IMR-90 (cell line): ENCODE measurements at regions of chr13 and their contacts with region 1.

Region 1: DNA sequence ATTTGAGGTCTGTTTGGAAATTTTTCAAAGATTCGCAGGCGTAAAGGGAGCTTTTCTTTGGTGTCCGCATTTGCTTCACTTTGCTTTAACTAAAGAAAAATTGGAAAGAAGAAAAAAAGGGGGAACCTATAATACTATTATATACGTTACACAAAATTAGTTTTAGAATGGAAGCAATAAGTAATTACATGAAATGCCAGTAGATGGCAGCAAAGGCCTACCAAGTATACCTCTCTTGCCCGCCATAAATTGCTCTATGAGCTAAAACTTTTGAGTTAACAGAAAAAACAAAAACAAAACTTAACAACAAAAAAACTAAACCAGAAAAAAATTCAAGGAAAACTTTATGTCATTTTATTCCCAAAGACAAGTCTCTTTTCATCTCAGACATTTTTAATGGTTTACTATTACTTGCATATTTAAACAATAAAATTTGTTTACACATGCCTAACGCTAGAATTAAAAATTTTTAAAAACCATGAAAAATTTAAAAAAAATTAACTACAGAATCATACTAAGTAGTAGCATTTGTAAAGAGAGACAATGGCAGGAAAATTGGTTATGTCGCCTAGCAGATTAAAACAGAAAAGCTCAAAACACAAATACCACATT is 271.4 kb downstream of the NALCN start:
- DNase-seq: peak; percentile 71
- ATAC-seq: peak; percentile 81
- H3K4me3 ChIP-seq: no peak overlapping the region
- H3K27ac ChIP-seq: no peak overlapping the region
- H3K4me1 ChIP-seq: peaks cover 5% of the 10 kb centered on the region
- H3K27me3 ChIP-seq: no peaks in the 10 kb centered on the region
- CTCF ChIP-seq: peak; percentile 85
- POLR2A ChIP-seq: no peak
- RAD21 ChIP-seq: peak; percentile 91

Region 2: DNA sequence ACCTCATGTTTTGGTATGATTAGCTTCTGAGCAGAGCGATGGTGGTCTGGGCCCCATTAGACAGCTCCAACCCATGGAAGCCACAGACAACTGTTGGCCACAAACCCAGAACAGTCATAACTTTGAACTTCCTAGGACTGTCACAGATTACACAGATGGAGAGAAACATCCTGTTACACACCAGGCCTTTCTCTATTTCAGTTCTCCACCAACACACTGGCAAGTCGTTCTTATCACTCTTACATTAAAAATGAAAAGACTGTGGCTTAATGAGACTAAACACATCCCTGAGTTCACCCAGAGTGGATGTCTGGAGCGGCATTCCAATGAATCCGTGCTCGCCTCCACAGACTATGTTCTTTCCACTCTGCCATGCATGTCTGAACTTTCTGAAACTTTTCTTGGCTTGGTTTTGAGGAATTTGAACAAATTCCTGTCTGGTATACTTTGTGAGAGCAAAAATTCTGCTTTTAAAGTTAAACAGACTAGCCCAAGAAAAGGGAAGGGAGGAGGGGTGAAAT is 162.3 kb after region 1 on chr13:
- CTCF ChIA-PET with region 1: no interaction called
- POLR2A ChIA-PET with region 1: no interaction called
- dilution Hi-C with region 1: no loop called
- in situ Hi-C with region 1: no loop called
- intact Hi-C with region 1: loop called (anchors 5 kb)
- DNase-seq: peak; percentile 90
- ATAC-seq: peak; percentile 90
- H3K4me3 ChIP-seq: no peak overlapping the region
- H3K27ac ChIP-seq: peak overlapping the region; percentile 19; the same call in 1 of the 2 replicates
- H3K4me1 ChIP-seq: peaks cover 19% of the 10 kb centered on the region
- H3K27me3 ChIP-seq: no peaks in the 10 kb centered on the region
- CTCF ChIP-seq: no peak
- POLR2A ChIP-seq: no peak
- RAD21 ChIP-seq: no peak

Region 3: DNA sequence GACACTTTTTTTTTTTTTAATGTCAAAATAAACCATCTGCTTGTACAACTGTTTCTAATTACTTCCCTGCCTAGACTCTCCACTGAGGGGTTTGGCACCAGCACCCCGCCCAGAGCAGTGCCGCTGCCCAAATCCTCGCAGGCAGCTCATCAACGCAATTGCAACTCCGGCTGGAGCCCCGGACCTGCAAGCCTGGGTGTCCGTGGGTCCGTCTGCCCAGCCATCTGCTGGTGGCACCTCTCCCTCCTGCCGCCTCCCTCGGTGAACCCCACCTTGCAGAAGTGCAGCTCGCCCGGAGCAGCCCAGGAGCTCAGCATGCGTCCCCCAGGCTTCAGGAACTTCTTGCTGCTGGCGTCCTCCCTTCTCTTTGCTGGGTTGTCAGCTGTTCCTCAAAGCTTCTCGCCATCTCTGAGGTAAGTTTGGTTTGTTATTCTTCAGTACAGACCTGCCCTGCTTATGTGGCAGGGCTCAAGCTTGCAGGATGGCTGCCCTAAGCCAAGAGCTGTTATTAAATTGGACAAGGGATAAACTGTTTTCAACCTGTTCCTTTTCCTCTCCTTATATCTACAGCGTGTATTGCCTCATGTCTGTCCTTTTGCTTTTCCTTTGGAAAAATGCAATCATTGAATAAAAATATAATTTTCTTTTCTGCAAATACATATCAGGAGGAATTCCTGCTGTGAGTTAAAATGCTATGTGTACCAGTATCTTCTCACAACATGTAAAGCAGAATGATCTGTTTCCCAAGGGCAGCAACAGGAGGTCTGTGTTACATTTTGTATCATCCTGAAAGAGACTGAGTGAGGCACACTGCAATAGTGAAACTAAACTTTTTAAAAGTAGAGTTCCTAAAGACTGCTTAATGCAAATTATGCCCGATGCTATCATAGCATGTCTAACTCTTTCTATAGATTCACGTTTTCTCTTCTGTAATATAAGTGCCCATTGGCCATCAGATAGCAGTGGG is 307.9 kb after region 1 on chr13 and contains the start of gene ITGBL1:
- CTCF ChIA-PET with region 1: interaction called, 6 read pairs
- POLR2A ChIA-PET with region 1: no interaction called
- dilution Hi-C with region 1: no loop called
- in situ Hi-C with region 1: no loop called
- intact Hi-C with region 1: loop called (anchors 1 kb)
- DNase-seq: peak; percentile 25
- ATAC-seq: peak; percentile 8
- H3K4me3 ChIP-seq: peak within 1 kb of the TSS; percentile 50
- H3K27ac ChIP-seq: peak within 1 kb of the TSS; percentile 74
- H3K4me1 ChIP-seq: peaks cover 35% of the 10 kb centered on the region
- H3K27me3 ChIP-seq: no peaks in the 10 kb centered on the region
- CTCF ChIP-seq: no peak
- POLR2A ChIP-seq: no peak
- RAD21 ChIP-seq: no peak
- total RNA-seq, gene ITGBL1: 22.2 and 46.7 TPM in 2 replicates

Region 4: GRCh38 chr13:101514788-101515187 is 369.9 kb after region 1 on chr13:
- CTCF ChIA-PET with region 1: no interaction called
- POLR2A ChIA-PET with region 1: no interaction called
- dilution Hi-C with region 1: no loop called
- in situ Hi-C with region 1: no loop called
- intact Hi-C with region 1: loop called (anchors 1 kb)
- DNase-seq: peak; percentile 68
- ATAC-seq: peak; percentile 76
- H3K4me3 ChIP-seq: no peak overlapping the region
- H3K27ac ChIP-seq: no peak overlapping the region
- H3K4me1 ChIP-seq: no peaks in the 10 kb centered on the region
- H3K27me3 ChIP-seq: no peaks in the 10 kb centered on the region
- CTCF ChIP-seq: peak; percentile 69
- POLR2A ChIP-seq: no peak
- RAD21 ChIP-seq: peak; percentile 73

Region 5: DNA sequence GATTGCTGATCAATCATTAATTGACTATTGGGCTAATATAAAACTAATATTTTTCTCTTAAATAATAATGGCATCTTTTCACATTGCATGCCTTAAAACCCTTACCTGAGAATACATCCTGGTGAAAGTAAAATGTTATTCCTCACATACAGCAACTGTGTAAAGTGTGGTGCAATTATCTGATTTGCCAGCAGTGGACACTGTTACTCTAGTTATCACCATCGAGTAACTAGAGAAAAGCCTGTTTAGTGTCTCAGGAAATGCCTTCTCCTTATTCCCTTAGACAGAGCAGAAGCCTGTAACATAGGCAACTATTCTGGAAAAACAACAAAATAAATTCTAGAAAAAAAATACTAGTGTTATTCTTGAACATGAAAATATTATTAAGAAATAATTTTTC is 797.1 kb after region 1 on chr13:
- CTCF ChIA-PET with region 1: no interaction called
- POLR2A ChIA-PET with region 1: no interaction called
- dilution Hi-C with region 1: no loop called
- in situ Hi-C with region 1: loop called (anchors 25 kb)
- intact Hi-C with region 1: loop called (anchors 2 kb)
- DNase-seq: peak; percentile 16
- ATAC-seq: peak; percentile 77; the same call in 1 of the 2 replicates
- H3K4me3 ChIP-seq: no peak overlapping the region
- H3K27ac ChIP-seq: no peak overlapping the region
- H3K4me1 ChIP-seq: no peaks in the 10 kb centered on the region
- H3K27me3 ChIP-seq: no peaks in the 10 kb centered on the region
- CTCF ChIP-seq: peak; percentile 56
- POLR2A ChIP-seq: no peak
- RAD21 ChIP-seq: peak; percentile 55

Region 6: GRCh38 chr13:102141625-102142472 is 996.9 kb after region 1 on chr13:
- CTCF ChIA-PET with region 1: no interaction called
- POLR2A ChIA-PET with region 1: no interaction called
- dilution Hi-C with region 1: no loop called
- in situ Hi-C with region 1: loop called (anchors 25 kb)
- intact Hi-C with region 1: loop called (anchors 5 kb)
- DNase-seq: peak; percentile 35
- ATAC-seq: peak; percentile 53
- H3K4me3 ChIP-seq: no peak overlapping the region
- H3K27ac ChIP-seq: no peak overlapping the region
- H3K4me1 ChIP-seq: no peaks in the 10 kb centered on the region
- H3K27me3 ChIP-seq: no peaks in the 10 kb centered on the region
- CTCF ChIP-seq: peak; percentile 72
- POLR2A ChIP-seq: no peak
- RAD21 ChIP-seq: peak; percentile 59

Region 7: DNA sequence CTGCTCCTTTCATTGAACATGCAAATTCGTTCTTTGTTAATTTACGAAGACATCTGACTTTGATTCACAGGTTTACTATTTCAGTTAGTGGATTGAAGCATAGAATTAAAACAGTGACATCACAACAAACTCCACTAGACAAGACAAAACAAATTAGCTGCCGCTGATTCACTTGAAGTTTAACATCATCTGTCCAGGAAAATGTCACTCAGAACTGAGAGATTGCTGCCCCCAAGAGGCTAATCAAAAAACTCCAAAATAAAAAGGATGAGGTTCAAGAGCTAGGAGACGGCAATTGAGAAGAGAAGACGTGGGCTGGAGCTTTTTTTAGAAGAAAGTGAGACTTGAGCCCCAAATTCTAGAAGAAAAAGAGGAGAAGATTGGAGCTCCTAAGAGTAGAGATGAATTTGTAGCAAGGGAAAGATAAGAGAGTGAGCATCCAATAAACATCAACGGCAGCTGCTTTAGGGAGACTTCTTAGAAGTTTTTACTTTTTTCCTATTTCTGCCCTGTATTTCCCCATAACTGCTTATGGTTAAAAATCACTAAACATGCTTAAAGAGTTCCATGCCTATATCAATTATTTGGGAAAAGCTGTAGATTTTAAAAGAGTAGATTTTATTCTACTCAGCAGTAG is 1411.1 kb after region 1 on chr13:
- CTCF ChIA-PET with region 1: interaction called, 4 read pairs
- POLR2A ChIA-PET with region 1: no interaction called
- dilution Hi-C with region 1: no loop called
- in situ Hi-C with region 1: loop called (anchors 25 kb)
- intact Hi-C with region 1: loop called (anchors 1 kb)
- DNase-seq: peak; percentile 26
- ATAC-seq: peak; percentile 75
- H3K4me3 ChIP-seq: no peak overlapping the region
- H3K27ac ChIP-seq: no peak overlapping the region
- H3K4me1 ChIP-seq: no peaks in the 10 kb centered on the region
- H3K27me3 ChIP-seq: no peaks in the 10 kb centered on the region
- CTCF ChIP-seq: peak; percentile 47
- POLR2A ChIP-seq: no peak
- RAD21 ChIP-seq: peak; percentile 51